Esophagus muscularis mucosa (tissue), 4 donors: ENCODE measurements at regions of chr1 and their contacts with region 1.

Region 1: DNA sequence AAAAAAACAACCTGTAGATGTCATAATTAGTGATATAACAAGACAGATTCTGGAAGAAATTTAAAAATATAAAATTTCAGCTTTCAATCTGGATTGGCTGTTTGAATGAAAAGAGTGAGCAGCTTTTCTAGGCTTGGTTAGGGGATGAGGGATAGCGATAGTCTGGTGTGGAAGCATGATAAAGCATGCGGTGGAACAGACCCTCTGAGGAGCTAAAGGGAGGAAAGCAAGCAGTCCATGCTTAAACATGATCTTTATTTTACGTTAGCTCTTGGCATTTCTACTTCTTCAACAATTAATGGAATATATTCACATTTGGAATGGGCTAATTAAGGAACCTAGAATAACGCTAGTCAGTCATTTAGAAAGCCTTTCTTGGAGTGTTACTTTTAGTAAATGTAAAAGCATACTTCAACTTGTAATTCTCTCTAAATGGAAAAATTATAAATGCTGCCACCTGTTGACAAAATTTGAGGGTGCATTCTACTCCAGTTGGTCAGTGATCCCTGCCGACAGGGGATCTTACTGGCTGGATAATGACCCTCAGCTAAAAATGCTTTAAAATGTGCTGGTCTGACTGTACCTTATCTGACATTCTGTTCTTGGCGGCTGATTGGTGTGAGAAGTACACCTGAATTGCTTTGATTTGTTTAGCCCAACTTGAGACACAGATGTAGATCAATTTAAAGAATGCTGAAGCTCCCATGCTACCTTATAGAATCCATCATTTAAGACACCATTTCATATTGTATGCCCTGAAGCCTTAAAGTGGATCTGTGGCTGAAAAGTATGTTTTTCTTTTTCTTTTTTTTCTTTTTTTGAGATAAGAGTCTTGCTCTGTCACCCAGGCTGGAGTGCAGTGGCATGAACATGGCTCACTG is 61.2 kb downstream of the AK4 start:
- DNase-seq: no peak
- H3K4me3 ChIP-seq: no peak overlapping the region
- H3K27ac ChIP-seq: no peak overlapping the region
- H3K4me1 ChIP-seq: peaks cover 7 to 34% (median 13%) of the 10 kb centered on the region in 4 donors
- H3K27me3 ChIP-seq: no peaks in the 10 kb centered on the region
- CTCF ChIP-seq: peak; percentile 68 to 77 (median 69)
- EP300 ChIP-seq: no peak
- POLR2A ChIP-seq: no peak

Region 2: DNA sequence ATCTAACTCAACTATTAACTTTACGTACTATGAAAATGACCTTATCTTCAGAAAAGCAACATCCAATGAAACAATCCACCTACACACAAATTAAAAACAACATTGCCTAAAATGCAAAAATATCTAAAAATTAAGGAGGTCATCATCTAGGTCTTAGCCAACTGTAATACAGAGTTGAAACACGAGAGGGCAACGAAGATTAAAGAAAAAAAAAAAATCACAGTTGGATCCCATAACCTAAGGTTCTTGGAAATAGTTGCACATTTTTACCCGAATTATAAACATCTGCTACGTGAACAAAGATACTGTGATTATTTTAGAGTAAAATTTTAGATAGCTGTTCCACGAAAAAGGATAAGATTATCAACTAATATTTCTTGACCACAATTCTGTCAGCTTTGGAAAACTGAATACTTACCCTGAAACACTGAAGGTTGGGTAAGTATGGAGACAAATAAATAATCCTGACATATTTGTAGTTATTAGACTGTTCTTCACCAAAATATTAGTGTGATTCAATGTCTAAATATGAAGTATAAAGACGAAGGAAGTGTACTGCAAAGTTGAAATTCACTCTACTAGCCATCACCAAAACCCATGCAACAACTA is 149.2 kb before region 1 on chr1:
- intact Hi-C with region 1: loop called (anchors 5 kb)
- DNase-seq: no peak
- H3K4me3 ChIP-seq: peak overlapping the region in 1 of 4 donors; percentile 2
- H3K27ac ChIP-seq: peak overlapping the region in 2 of 4 donors; percentile 0 to 6
- H3K4me1 ChIP-seq: peaks cover 30 to 88% (median 83%) of the 10 kb centered on the region in 4 donors
- H3K27me3 ChIP-seq: no peaks in the 10 kb centered on the region
- CTCF ChIP-seq: peak; percentile 77 to 83 (median 82)
- EP300 ChIP-seq: no peak
- POLR2A ChIP-seq: no peak